ENCODE measurements at regions of chr18 and their contacts with region 1.

Region 1: GRCh38 chr18:44870631-44871502 is 190.2 kb downstream of the SETBP1 start:
- DNase-seq: no peak
- ATAC-seq: peak; percentile 82
- H3K4me3 ChIP-seq: no peak overlapping the region
- H3K27ac ChIP-seq: no peak overlapping the region
- H3K4me1 ChIP-seq: peaks cover 12% of the 10 kb centered on the region
- H3K27me3 ChIP-seq: no peaks in the 10 kb centered on the region
- CTCF ChIP-seq: peak in 1 of 3 experiments; percentile 13; a peak in 1 of 6 replicates
- EP300 ChIP-seq: 0 out of 4 replicates have a peak, but pooled peaks of 1 of the 2 experiments have one; percentile 5
- POLR2A ChIP-seq: no peak
- RAD21 ChIP-seq: peak; percentile 29; the same call in 1 of the 2 replicates

Region 2: DNA sequence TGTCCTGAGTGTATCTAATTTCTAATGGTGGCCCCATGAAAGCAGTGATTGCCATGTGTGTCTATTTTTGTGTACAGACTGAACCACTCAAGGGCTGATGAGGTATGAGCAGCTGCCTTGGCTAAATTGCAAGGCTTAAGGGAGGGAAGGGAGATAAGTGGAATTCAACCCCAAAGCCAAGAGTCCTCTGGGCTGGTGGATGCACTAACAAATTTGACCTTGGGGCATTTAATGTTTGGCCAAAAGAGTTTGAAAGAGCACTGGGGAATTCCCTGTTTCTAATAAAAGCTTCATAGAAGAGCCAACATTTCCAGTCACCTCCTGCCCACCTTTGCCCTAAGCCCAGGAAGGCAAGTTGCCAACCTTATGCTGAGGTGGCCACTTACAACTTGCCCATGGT is 18.0 kb before region 1 on chr18:
- CTCF ChIA-PET with region 1: interaction called, 13 read pairs
- POLR2A ChIA-PET with region 1: interaction called, 4 read pairs
- RAD21 ChIA-PET with region 1: interaction called, 3 read pairs
- SMC1A ChIA-PET with region 1: interaction called, 10 read pairs
- in situ Hi-C with region 1: no loop called
- intact Hi-C with region 1: no loop called
- DNase-seq: no peak
- ATAC-seq: peak; percentile 44
- H3K4me3 ChIP-seq: no peak overlapping the region
- H3K27ac ChIP-seq: no peak overlapping the region
- H3K4me1 ChIP-seq: peaks cover 7% of the 10 kb centered on the region; the same call in 1 of the 2 replicates
- H3K27me3 ChIP-seq: no peaks in the 10 kb centered on the region
- CTCF ChIP-seq: no peak
- EP300 ChIP-seq: no peak
- POLR2A ChIP-seq: no peak
- RAD21 ChIP-seq: no peak